ENCODE measurements at regions of chr5 and their contacts with region 1.

Region 1: DNA sequence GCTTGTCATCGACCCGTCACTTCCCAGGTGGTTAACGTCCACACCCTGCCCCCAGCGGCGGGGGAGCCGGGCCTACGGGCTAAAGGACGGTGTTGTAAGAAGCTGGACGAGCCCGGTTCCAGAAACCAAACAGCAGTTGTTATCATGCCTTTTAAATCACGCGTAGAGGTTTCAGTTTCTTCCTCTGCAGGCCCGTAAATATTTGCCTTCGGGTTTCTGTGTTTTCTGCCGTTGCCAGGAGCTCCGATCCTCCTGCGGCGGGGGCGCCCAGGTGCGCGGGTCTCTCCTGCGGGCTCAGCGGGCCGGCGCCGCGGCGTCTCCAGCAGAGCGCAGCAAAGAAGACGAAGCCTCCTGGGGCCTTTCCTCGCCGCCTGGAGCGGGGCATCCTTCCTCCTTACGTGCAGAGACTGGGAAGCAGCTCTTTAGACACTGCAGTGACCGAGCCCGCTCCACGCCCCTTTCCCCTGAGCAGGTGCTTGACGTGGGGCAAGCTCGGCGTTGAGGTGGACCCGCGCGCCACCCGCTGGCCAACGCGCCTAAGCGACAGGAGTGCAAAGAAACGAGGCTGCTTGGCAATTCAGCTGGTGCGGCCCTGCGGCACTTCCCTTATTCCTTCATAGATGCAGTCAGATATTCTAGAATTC is 21.8 kb upstream of the TTC1 start:
- DNase-seq: peak; percentile 8
- ATAC-seq: peak; percentile 99
- H3K4me3 ChIP-seq: peak overlapping the region; percentile 58; the same call in 1 of the 2 replicates
- H3K27ac ChIP-seq: no peak overlapping the region
- H3K4me1 ChIP-seq: no peaks in the 10 kb centered on the region
- H3K27me3 ChIP-seq: peaks cover 3 to 4% of the 10 kb centered on the region in 2 experiments
- CTCF ChIP-seq: peak; percentile 77 to 86 (median 80)
- EP300 ChIP-seq: no peak
- POLR2A ChIP-seq: no peak
- RAD21 ChIP-seq: peak; percentile 75

Region 2: DNA sequence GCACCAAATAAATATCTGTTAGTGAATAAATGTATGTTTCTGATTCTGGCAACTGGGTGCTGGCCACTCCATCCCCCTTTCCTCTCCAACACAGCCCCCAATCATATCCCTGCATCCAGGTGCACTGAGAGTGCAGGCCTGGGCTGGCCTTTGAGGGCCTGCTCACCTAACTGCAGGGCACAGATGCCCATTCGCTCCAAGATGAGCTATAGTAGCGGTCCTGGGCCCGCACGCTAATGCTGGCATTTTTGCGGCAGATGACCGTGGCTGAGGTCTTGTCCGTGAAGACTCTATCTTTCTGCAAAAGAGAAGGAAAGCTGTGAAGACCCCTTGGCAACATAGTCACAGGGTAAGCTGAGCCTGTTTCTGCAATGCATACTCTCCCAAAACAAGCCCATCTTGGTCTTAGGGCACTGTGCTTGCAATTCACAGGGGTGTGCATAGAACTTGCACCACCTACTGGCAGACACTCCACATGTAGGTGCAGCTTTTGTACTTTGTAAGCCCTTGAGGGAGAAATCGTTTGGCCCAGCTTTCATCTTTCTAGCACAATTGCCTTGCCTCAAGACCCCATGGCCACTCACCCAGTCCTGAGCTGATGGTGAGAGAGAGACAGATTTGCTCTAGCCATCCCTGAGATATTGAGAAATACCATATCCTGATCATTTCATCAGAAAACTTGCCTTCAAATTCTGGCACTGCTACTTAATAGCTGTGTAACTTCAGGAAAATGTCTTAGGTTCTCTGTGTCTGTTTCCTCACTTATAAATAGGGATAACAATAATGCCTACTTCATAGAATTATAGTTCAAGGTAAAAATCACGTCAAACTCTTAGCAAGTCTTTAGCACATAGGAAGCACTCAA is 670.4 kb before region 1 on chr5:
- CTCF ChIA-PET with region 1: interaction called, 10 read pairs
- POLR2A ChIA-PET with region 1: no interaction called
- RAD21 ChIA-PET with region 1: interaction called, 9 read pairs
- SMC1A ChIA-PET with region 1: no interaction called
- in situ Hi-C with region 1: loop called (anchors 10 kb)
- intact Hi-C with region 1: no loop called
- DNase-seq: no peak
- ATAC-seq: peak; percentile 98
- H3K4me3 ChIP-seq: no peak overlapping the region
- H3K27ac ChIP-seq: no peak overlapping the region
- H3K4me1 ChIP-seq: no peaks in the 10 kb centered on the region
- H3K27me3 ChIP-seq: no peaks in the 10 kb centered on the region
- CTCF ChIP-seq: peak; percentile 73 to 77 (median 76)
- EP300 ChIP-seq: no peak
- POLR2A ChIP-seq: no peak
- RAD21 ChIP-seq: peak; percentile 75

Region 3: GRCh38 chr5:159324102-159324760 is 662.9 kb before region 1 on chr5:
- CTCF ChIA-PET with region 1: interaction called, 9 read pairs
- POLR2A ChIA-PET with region 1: no interaction called
- RAD21 ChIA-PET with region 1: no interaction called
- SMC1A ChIA-PET with region 1: no interaction called
- in situ Hi-C with region 1: loop called (anchors 10 kb)
- intact Hi-C with region 1: no loop called
- DNase-seq: no peak
- ATAC-seq: no peak
- H3K4me3 ChIP-seq: no peak overlapping the region
- H3K27ac ChIP-seq: no peak overlapping the region
- H3K4me1 ChIP-seq: no peaks in the 10 kb centered on the region
- H3K27me3 ChIP-seq: 0 out of 4 replicates have a peak, but pooled peaks cover 0 to 3% of the 10 kb centered on the region in 2 experiments
- CTCF ChIP-seq: no peak
- EP300 ChIP-seq: no peak
- POLR2A ChIP-seq: no peak
- RAD21 ChIP-seq: no peak

Region 4: DNA sequence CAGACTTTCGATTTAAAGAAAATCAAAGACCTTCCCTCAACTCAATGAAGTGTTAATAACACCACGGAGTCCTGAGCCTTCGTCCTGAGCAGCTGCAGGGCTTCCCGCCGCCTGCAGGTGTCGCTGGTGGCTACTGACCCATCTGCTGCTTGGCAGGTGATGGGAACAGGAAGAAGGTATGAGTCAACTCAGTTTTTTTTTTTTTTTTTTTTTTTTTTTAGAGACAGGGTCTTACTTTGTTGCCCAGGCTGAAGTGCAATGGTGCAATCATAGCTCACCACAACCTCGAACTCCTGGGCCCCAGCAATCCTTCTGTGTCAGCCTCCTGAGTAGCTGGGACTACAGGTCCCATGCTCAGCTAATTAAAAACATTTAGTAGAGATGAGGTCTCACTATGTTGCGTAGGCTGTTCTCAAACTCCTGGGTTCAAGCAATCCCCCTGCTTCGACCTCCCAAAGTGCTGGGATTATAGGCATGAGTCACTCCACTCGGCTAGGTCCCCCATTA is 471.2 kb before region 1 on chr5:
- CTCF ChIA-PET with region 1: interaction called, 4 read pairs
- POLR2A ChIA-PET with region 1: no interaction called
- RAD21 ChIA-PET with region 1: interaction called, 3 read pairs
- SMC1A ChIA-PET with region 1: no interaction called
- in situ Hi-C with region 1: no loop called
- intact Hi-C with region 1: loop called (anchors 2 kb)
- DNase-seq: peak; percentile 26
- ATAC-seq: peak; percentile 97
- H3K4me3 ChIP-seq: no peak overlapping the region
- H3K27ac ChIP-seq: no peak overlapping the region
- H3K4me1 ChIP-seq: peaks cover 3% of the 10 kb centered on the region; the same call in 1 of the 2 replicates
- H3K27me3 ChIP-seq: no peaks in the 10 kb centered on the region
- CTCF ChIP-seq: peak; percentile 68 to 90 (median 89)
- EP300 ChIP-seq: no peak
- POLR2A ChIP-seq: no peak
- RAD21 ChIP-seq: peak; percentile 74

Region 5: DNA sequence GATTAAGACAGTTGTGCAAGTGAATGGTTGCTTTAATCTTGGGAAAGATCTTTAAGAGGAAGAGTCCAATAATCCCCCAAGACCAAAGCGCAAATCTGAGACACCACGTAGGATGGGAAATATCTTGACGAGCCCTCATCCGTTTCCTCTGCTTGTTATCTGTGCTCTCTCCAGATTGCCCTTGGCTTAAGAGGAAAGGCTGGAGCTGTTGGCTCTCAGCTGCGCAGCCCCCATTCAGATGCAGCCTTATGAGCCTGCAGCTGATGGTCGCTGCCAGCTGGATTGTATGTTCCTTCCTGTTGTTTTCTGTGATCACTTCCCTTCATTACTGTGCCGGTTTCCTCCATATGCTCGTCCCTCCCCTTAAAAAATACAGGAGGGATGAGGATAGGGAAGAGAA is 84.4 kb after region 1 on chr5:
- CTCF ChIA-PET with region 1: no interaction called
- POLR2A ChIA-PET with region 1: no interaction called
- RAD21 ChIA-PET with region 1: no interaction called
- SMC1A ChIA-PET with region 1: no interaction called
- in situ Hi-C with region 1: no loop called
- intact Hi-C with region 1: no loop called
- DNase-seq: no peak
- ATAC-seq: no peak
- H3K4me3 ChIP-seq: no peak overlapping the region
- H3K27ac ChIP-seq: no peak overlapping the region
- H3K4me1 ChIP-seq: no peaks in the 10 kb centered on the region
- H3K27me3 ChIP-seq: no peaks in the 10 kb centered on the region
- CTCF ChIP-seq: no peak
- EP300 ChIP-seq: no peak
- POLR2A ChIP-seq: no peak
- RAD21 ChIP-seq: no peak

Measured in GM12878 (cell line).